ENCODE measurements at regions of chr17 and their contacts with region 1.

Region 1: GRCh38 chr17:4908301-4908700 is 5.4 kb upstream of the CHRNE start:
- DNase-seq: peak; percentile 50
- ATAC-seq: peak; percentile 44
- H3K4me3 Mint-ChIP-seq: no peak overlapping the region
- H3K27ac Mint-ChIP-seq: no peak overlapping the region
- H3K4me1 Mint-ChIP-seq: peaks cover 13% of the 10 kb centered on the region
- H3K27me3 Mint-ChIP-seq: peaks cover 5% of the 10 kb centered on the region; the same call in 1 of the 2 replicates
- CTCF ChIP-seq: no peak

Region 2: GRCh38 chr17:4884489-4884888 is 23.8 kb before region 1 on chr17:
- CTCF ChIA-PET with region 1: no interaction called
- POLR2A ChIA-PET with region 1: no interaction called
- DNase-seq: no peak
- ATAC-seq: no peak
- H3K4me3 Mint-ChIP-seq: no peak overlapping the region
- H3K27ac Mint-ChIP-seq: no peak overlapping the region
- H3K4me1 Mint-ChIP-seq: peaks cover 16% of the 10 kb centered on the region
- H3K27me3 Mint-ChIP-seq: no peaks in the 10 kb centered on the region
- CTCF ChIP-seq: no peak

Region 3: DNA sequence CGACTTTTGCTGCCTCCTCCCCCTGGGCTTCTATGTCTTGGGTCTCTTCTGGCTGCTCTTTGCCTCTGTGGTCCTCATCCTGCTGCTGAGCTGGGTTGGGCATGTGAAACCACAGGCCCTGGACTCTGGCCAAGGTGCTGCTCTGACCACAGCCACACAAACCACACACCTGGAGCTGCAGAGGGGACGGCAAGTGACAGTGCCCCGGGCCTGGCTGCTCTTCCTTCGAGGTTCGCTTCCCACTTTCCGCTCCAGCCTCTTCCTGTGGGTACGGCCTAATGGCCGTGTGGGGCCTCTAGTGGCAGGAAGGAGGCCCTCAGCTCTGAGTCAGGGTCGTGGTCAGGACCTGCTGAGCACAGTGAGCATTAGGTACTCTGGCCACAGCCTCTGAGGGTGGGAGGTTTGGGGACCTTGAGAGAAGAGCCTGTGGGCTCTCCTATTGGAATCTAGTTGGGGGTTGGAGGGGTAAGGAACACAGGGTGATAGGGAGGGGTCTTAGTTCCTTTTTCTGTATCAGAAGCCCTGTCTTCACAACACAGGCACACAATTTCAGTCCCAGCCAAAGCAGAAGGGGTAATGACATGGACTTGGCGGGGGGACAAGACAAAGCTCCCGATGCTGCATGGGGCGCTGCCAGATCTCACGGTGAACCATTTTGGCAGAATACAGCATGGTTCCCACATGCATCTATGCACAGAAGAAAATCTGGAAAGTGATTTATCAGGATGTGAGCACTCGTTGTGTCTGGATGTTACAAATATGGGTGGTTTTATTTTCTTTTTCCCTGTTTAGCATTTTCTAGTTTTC is 26.1 kb after region 1 on chr17:
- CTCF ChIA-PET with region 1: interaction called, 39 read pairs
- POLR2A ChIA-PET with region 1: interaction called, 4 read pairs
- DNase-seq: peak; percentile 50
- ATAC-seq: peak; percentile 81
- H3K4me3 Mint-ChIP-seq: no peak overlapping the region
- H3K27ac Mint-ChIP-seq: no peak overlapping the region; the same call in 1 of the 2 replicates
- H3K4me1 Mint-ChIP-seq: peaks cover 18% of the 10 kb centered on the region
- H3K27me3 Mint-ChIP-seq: no peaks in the 10 kb centered on the region
- CTCF ChIP-seq: no peak

Region 4: DNA sequence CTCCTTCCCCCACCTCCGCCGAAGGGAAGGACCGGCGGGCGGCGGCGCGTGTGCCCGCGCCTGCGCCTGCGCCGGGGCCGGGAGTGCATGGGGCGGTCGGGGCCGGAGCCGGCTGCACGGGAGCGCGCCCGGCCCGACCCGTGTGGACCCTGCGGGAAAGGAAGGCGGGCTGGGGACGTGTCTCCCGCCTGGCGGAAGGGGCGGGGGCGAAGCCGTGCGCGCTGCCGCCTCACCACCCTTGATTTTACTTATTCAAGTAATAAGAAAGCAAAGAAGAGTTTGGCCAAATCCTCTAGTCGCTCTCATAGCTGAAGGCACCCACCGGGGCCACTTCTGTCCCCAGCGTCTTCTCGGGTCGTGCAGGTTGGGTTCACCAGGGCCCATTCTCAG is 40.6 kb after region 1 on chr17:
- CTCF ChIA-PET with region 1: interaction called, 15 read pairs
- POLR2A ChIA-PET with region 1: interaction called, 8 read pairs
- DNase-seq: peak; percentile 78
- ATAC-seq: peak; percentile 40
- H3K4me3 Mint-ChIP-seq: peak overlapping the region; percentile 91
- H3K27ac Mint-ChIP-seq: peak overlapping the region; percentile 82; the same call in 1 of the 2 replicates
- H3K4me1 Mint-ChIP-seq: peaks cover 47% of the 10 kb centered on the region
- H3K27me3 Mint-ChIP-seq: no peaks in the 10 kb centered on the region
- CTCF ChIP-seq: no peak

Region 5: DNA sequence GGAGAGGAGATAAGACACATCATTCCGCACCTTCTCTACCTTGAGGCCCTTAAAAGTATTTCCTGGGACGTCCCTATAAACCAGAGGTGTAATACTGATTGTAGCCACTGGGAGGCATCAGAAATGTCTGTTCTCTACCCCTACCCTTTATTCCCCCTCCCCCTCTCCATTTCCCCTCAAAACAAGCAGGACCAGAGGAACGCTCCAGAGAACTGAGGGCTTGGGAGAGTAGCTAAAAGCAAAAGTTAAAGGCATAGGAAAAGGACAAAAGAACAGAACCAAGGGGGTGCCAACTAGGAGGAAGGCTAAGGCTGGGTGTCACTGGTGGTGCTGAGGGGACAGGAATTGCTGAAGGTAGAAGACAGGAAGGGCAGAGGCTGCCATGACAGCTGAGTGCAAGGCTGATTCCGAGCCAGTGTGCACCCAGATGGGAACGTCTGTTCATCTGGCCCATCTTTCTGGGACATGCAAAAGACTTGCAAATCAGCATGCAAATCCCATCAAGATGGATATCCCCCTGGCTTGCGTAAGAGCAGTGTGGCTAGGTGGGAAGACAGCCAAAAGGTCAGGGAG is 72.4 kb after region 1 on chr17:
- CTCF ChIA-PET with region 1: interaction called, 14 read pairs
- POLR2A ChIA-PET with region 1: no interaction called
- DNase-seq: peak; percentile 31
- ATAC-seq: peak; percentile 91
- H3K4me3 Mint-ChIP-seq: no peak overlapping the region
- H3K27ac Mint-ChIP-seq: no peak overlapping the region
- H3K4me1 Mint-ChIP-seq: peaks cover 5% of the 10 kb centered on the region
- H3K27me3 Mint-ChIP-seq: peaks cover 43% of the 10 kb centered on the region
- CTCF ChIP-seq: peak; percentile 78

Region 6: DNA sequence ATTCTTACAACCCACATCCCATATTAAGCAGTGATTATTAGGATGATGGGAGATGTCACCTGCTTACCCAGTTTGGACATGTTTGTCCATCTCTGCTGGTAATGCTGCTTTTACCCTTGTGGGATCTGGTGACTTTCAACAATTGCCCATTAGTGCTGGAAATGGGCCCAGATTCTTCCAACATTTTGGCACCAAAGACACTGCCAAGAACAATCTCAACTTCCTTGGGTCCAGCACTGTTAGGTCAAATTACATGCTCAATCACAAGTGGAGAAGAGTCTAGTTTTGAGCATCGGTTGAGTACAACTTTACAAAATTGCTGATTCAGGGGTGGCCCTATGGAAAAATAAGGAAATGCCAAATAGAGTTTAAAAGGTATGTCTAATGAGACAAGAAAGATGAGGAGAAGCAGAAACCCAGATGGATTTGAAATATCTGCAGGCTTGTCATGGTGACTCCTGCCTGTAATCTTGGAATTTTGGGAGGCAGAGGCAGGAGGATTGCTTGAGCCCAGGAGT is 157.0 kb after region 1 on chr17:
- CTCF ChIA-PET with region 1: interaction called, 27 read pairs
- POLR2A ChIA-PET with region 1: no interaction called
- DNase-seq: no peak
- ATAC-seq: no peak
- H3K4me3 Mint-ChIP-seq: no peak overlapping the region
- H3K27ac Mint-ChIP-seq: no peak overlapping the region
- H3K4me1 Mint-ChIP-seq: no peaks in the 10 kb centered on the region
- H3K27me3 Mint-ChIP-seq: peaks cover 12% of the 10 kb centered on the region
- CTCF ChIP-seq: no peak

Region 7: GRCh38 chr17:5191541-5192417 is 283.5 kb after region 1 on chr17 and contains the start of gene ZNF594:
- CTCF ChIA-PET with region 1: no interaction called
- POLR2A ChIA-PET with region 1: no interaction called
- DNase-seq: peak; percentile 96
- ATAC-seq: peak; percentile 100
- H3K4me3 Mint-ChIP-seq: peak within 1 kb of the TSS; percentile 87
- H3K27ac Mint-ChIP-seq: no peak within 1 kb of the TSS
- H3K4me1 Mint-ChIP-seq: peaks cover 7% of the 10 kb centered on the region
- H3K27me3 Mint-ChIP-seq: peaks cover 11% of the 10 kb centered on the region
- CTCF ChIP-seq: peak; percentile 35; the same call in 1 of the 2 replicates
- total RNA-seq, gene ZNF594: 9.5 to 11.6 TPM (median 10.1 TPM) in 3 replicates